ENCODE measurements at regions of chr6 and their contacts with region 1.

Region 1: GRCh38 chr6:33248925-33249731 is 22.5 kb downstream of the VPS52 start:
- DNase-seq: peak; percentile 97
- H3K4me3 Mint-ChIP-seq: peak overlapping the region; percentile 66
- H3K27ac Mint-ChIP-seq: peak overlapping the region; percentile 51
- H3K4me1 Mint-ChIP-seq: peaks cover 26% of the 10 kb centered on the region
- H3K27me3 Mint-ChIP-seq: peaks cover 11% of the 10 kb centered on the region
- CTCF ChIP-seq: no peak

Region 2: DNA sequence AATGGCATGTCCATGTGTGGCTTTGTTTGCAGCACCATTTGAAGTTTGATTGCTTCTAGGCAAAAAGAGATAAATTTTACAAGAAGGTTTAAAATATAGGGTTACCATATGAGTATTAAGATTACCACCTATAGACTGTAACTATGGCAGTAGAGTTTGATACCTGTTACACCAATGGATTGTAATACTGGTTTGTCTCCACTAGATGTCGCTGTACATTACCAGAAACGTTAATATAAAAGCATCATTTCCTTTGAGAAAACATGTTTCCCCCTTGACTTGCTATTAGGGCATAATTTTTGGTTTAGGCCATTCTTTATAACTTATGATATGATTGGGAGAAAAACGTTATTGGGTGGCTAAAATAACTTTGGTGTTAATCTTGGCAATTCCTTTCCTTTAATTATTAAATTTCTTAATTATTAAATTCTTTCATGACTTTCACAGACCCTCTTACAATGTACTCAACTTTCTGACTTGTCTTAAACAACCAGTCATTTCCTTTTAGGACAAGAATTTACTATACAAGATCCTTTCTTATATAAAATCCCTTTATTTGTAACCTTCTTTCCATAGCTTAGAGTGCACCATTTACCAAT is 130.5 kb before region 1 on chr6:
- CTCF ChIA-PET with region 1: interaction called, 9 read pairs
- intact Hi-C with region 1: loop called (anchors 2 kb)
- DNase-seq: peak; percentile 41
- H3K4me3 Mint-ChIP-seq: no peak overlapping the region
- H3K27ac Mint-ChIP-seq: no peak overlapping the region
- H3K4me1 Mint-ChIP-seq: no peaks in the 10 kb centered on the region
- H3K27me3 Mint-ChIP-seq: peaks cover 90% of the 10 kb centered on the region
- CTCF ChIP-seq: peak; percentile 86

Region 3: DNA sequence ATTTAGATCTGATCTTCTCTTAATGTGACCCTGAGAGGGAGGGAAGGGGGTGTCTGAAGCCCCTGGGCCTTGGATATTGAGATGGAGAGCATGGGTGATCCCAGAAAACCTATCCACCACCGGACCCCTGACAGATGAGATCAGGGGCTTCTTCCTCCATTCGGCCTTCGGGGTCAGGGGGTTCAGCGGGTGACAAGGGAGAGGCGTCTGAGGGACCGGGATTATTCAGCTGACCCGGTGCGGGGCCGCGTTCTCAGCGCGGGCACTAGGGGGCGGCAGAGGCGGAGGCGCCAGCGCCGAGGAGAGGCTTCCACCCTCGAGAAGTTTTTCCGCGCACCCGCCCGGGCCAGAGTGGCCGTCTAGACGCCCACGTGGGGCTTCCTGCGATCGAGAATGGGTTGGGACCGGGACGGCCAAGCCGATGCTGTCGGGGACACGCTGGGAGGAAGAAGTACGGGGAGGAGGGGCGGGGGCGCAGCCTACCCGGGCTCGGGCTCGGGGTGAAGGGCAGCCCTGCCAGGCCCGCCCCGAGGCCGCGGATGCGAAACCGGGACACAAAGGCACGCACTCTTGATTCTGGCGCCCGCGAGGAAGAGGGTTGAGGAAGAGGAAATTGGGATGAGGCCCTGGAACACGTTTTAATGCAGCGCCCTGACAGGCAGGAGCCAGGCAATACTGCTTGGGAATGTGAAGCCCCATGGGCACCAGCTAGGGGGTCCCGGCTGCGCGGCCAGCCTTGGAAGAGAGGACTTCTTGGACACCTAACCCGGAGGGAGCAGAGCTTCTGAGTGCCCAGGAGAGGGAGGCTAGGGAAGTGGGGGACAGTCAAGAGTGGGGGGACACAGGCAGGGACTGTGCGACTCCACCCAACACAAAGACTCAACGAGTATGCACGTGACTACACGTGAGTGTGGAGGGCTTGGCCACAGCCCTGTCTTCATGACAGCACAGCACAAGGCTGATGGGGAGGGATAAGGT is 87.5 kb before region 1 on chr6:
- CTCF ChIA-PET with region 1: interaction called, 13 read pairs
- intact Hi-C with region 1: loop called (anchors 1 kb)
- DNase-seq: peak; percentile 93
- H3K4me3 Mint-ChIP-seq: peak overlapping the region; percentile 81
- H3K27ac Mint-ChIP-seq: peak overlapping the region; percentile 9
- H3K4me1 Mint-ChIP-seq: peaks cover 16% of the 10 kb centered on the region
- H3K27me3 Mint-ChIP-seq: peaks cover 77% of the 10 kb centered on the region
- CTCF ChIP-seq: peak; percentile 97

Region 4: DNA sequence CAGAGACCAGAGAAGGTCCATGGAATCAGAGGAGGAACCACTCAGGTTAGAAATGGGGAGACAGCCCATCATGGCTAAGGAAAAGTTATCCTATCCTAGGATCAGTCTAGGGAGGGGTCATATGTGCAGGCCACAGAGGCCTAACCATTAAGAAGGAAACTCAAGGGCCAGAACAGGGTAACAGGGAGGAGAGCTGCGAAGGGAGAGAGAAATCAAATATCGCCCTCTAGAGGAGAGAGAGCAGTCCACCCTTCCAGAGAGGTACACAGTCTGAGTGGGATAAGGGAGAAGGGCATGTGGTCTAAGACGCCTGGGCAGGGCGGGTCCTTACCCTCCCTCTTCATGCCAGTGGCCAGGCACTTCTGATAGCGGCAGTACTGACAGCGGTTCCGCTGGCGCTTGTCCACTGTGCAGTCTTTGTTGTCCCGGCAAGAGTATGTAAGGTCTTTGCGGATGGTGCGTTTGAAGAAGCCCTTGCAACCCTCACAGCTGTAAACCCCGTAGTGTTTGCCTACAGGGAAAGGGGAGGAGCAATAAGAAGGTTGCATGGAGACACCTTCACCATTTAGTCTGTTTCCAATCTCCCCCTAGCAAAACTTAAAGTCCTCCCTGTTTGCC is 51.6 kb before region 1 on chr6:
- CTCF ChIA-PET with region 1: interaction called, 10 read pairs
- intact Hi-C with region 1: no loop called
- DNase-seq: peak; percentile 57
- H3K4me3 Mint-ChIP-seq: peak overlapping the region; percentile 97
- H3K27ac Mint-ChIP-seq: no peak overlapping the region
- H3K4me1 Mint-ChIP-seq: peaks cover 38% of the 10 kb centered on the region
- H3K27me3 Mint-ChIP-seq: peaks cover 9% of the 10 kb centered on the region
- CTCF ChIP-seq: peak; percentile 80